ENCODE measurements at regions of chr1 and their contacts with region 1.

Region 1: GRCh38 chr1:172322219-172323061 is 98.0 kb upstream of the C1orf105 start:
- DNase-seq: peak; percentile 97
- ATAC-seq: peak; percentile 76
- H3K4me3 ChIP-seq: peak overlapping the region; percentile 57
- H3K27ac ChIP-seq: peak overlapping the region; percentile 88
- H3K4me1 ChIP-seq: peaks cover 53% of the 10 kb centered on the region
- H3K27me3 ChIP-seq: no peaks in the 10 kb centered on the region
- CTCF ChIP-seq: peak; percentile 37; the same call in 1 of the 2 replicates

Region 2: DNA sequence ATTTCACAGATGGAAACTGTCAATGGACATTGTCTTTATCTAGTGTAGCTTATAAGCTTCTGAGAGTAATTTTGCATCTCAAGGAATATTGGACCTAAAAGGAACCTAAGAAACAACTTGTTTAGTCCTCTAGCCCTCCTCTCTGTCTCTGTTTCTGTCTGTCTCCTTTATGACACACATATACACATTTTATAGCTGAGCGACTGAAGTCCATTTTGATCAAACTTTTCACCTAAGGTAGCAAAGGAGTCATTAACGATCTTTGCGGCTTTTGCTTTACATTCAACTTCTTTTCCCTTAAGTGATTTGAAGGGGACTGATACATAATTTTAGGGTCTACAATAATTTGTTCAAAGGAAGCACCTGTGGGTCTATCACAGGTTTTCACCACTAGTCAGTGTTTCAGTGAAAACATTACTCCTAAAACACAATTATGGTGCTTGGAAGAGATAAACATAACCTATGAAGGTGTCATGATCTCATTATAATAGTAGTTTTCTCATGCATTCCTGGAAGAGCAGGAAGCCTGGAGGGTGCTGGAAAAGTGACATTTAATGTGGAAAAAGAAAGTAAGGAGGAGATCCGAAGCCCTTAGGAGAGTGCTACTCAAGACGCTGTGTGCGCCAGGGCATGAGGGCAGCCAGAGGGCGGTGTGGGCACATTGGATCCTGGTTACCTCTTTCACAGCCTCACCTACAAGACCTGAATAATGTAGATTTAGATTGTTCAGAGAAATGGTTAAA is 232.5 kb before region 1 on chr1:
- CTCF ChIA-PET with region 1: no interaction called
- POLR2A ChIA-PET with region 1: no interaction called
- intact Hi-C with region 1: loop called (anchors 1 kb)
- DNase-seq: peak; percentile 94
- ATAC-seq: peak; percentile 100
- H3K4me3 ChIP-seq: peak overlapping the region; percentile 10; the same call in 1 of the 2 replicates
- H3K27ac ChIP-seq: no peak overlapping the region
- H3K4me1 ChIP-seq: no peaks in the 10 kb centered on the region
- H3K27me3 ChIP-seq: no peaks in the 10 kb centered on the region
- CTCF ChIP-seq: peak; percentile 100

Region 3: GRCh38 chr1:172269644-172270043 is 52.8 kb before region 1 on chr1:
- CTCF ChIA-PET with region 1: no interaction called
- POLR2A ChIA-PET with region 1: no interaction called
- intact Hi-C with region 1: loop called (anchors 2 kb)
- DNase-seq: no peak
- ATAC-seq: no peak
- H3K4me3 ChIP-seq: no peak overlapping the region
- H3K27ac ChIP-seq: no peak overlapping the region
- H3K4me1 ChIP-seq: peaks cover 19% of the 10 kb centered on the region
- H3K27me3 ChIP-seq: no peaks in the 10 kb centered on the region
- CTCF ChIP-seq: no peak

Region 4: DNA sequence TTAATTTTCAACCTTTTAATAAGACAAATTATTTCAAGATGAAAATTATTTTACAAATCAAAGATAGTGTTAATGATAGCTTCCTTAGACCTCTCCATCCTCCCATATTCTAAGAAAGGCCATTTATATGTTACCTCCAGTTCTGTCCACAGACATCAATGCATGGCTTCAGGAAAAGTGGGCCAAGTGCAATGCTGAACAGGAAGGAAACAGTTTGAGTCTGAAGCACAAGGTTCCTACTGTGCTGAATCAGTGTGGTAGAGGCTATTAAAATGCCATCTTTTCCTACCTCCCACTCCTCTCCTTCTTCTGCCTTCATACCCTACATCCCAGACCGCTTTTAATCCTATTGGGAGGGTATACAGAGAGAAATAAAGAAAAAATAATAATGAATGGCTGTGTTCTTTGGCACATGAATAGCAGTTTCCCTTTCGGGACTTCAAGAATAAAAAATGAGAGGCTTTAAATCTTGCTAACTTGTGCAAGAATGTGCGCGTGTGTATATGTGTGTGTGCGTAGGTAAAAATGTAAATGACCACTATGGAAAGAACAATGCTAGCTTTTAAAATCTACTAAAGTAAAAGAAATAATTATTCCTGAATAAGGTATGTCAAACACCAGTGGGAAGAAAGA is 35.4 kb after region 1 on chr1:
- CTCF ChIA-PET with region 1: interaction called, 9 read pairs
- POLR2A ChIA-PET with region 1: interaction called, 26 read pairs
- intact Hi-C with region 1: loop called (anchors 1 kb)
- DNase-seq: no peak
- ATAC-seq: no peak
- H3K4me3 ChIP-seq: peak overlapping the region; percentile 51; the same call in 1 of the 2 replicates
- H3K27ac ChIP-seq: peak overlapping the region; percentile 84
- H3K4me1 ChIP-seq: peaks cover 69% of the 10 kb centered on the region
- H3K27me3 ChIP-seq: no peaks in the 10 kb centered on the region
- CTCF ChIP-seq: no peak

Region 5: DNA sequence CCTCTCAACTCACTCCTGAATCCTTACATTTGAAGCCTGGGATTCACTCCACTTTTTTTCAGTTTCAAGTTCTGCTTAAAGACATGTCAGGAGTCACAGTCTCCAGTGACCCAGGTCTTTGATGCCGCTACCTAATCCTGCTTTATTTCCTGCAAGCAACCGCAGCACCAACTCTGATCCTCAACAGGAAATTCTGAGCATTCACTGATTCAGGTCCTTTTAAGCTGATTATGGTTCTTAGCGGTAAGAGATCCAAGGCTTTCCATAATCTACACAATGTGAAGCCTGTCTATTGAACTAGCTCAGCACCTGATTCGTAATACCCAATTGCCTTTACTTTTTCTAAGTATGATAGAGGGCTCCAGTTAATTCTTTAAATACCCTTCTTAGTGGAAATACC is 165.1 kb after region 1 on chr1:
- CTCF ChIA-PET with region 1: no interaction called
- POLR2A ChIA-PET with region 1: no interaction called
- intact Hi-C with region 1: no loop called
- DNase-seq: no peak
- ATAC-seq: no peak
- H3K4me3 ChIP-seq: no peak overlapping the region
- H3K27ac ChIP-seq: no peak overlapping the region
- H3K4me1 ChIP-seq: peaks cover 34% of the 10 kb centered on the region
- H3K27me3 ChIP-seq: no peaks in the 10 kb centered on the region
- CTCF ChIP-seq: no peak

Region 6: GRCh38 chr1:172746091-172746829 is 423.8 kb after region 1 on chr1:
- CTCF ChIA-PET with region 1: no interaction called
- POLR2A ChIA-PET with region 1: no interaction called
- intact Hi-C with region 1: no loop called
- DNase-seq: peak; percentile 100
- ATAC-seq: peak; percentile 91
- H3K4me3 ChIP-seq: peak overlapping the region; percentile 5; the same call in 1 of the 2 replicates
- H3K27ac ChIP-seq: peak overlapping the region; percentile 68
- H3K4me1 ChIP-seq: peaks cover 34% of the 10 kb centered on the region
- H3K27me3 ChIP-seq: no peaks in the 10 kb centered on the region
- CTCF ChIP-seq: no peak